ENCODE measurements at regions of chr19 and their contacts with region 1.

Region 1: GRCh38 chr19:49340069-49340864 is 5.1 kb downstream of the CD37 start:
- DNase-seq: peak; percentile 56
- H3K4me3 ChIP-seq: no peak overlapping the region
- H3K27ac ChIP-seq: no peak overlapping the region
- H3K4me1 ChIP-seq: peaks cover 15% of the 10 kb centered on the region
- H3K27me3 ChIP-seq: no peaks in the 10 kb centered on the region
- CTCF ChIP-seq: no peak
- POLR2A ChIP-seq: no peak

Region 2: DNA sequence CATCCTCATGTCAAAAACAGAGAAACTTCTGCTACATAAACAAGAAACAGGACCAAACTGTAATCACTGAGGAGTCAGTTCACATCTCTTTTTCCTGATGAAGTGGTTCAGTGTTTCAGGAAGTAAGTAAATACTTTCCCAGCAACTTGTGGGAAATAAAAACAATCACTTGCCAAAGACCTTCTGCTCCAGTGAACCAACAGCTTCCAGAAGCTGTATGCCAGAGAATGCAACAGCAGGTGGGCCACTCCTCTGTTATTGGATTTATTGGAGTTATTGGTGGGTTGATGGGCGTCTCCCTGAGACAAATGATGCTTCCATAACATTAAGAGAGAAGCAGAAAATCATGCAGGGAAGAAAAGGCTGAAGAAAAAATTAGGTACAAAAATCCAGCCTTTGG is 25.2 kb before region 1 on chr19:
- CTCF ChIA-PET with region 1: no interaction called
- POLR2A ChIA-PET with region 1: no interaction called
- dilution Hi-C with region 1: no loop called
- intact Hi-C with region 1: loop called (anchors 1 kb)
- DNase-seq: peak; percentile 39
- H3K4me3 ChIP-seq: no peak overlapping the region
- H3K27ac ChIP-seq: no peak overlapping the region
- H3K4me1 ChIP-seq: no peaks in the 10 kb centered on the region
- H3K27me3 ChIP-seq: no peaks in the 10 kb centered on the region
- CTCF ChIP-seq: no peak
- POLR2A ChIP-seq: no peak

Region 3: DNA sequence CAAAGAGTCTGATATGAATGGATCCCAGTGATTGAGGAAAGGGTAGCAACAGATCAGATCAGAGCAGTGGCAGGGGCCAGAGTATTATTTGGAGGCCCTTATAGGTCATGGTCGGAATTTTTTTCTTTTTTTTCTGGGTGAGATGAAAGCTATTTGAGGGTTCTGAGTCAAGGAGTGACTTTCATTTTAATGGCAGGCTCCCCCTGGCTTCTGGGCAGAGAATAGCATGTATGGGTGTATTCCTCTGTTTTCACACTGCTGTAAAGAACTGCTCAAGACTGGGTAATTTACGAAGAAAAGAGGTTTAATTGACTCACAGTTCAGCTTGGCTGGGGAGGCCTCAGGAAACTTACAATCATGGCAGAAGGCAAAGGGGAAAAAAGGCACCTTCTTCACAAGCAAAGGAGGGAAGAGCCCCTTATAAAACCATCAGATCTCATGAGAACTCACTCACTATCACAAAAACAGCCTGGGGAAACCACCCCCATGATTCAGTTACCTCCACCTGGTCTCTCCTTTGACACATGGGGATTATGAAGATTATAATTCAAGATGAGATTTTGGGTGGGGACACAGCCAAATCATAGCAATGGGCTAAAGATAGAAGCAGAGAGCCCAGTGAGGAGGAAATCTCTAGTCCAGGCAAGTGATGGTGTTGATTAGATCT is 12.3 kb before region 1 on chr19:
- CTCF ChIA-PET with region 1: interaction called, 15 read pairs
- POLR2A ChIA-PET with region 1: no interaction called
- dilution Hi-C with region 1: no loop called
- intact Hi-C with region 1: no loop called
- DNase-seq: peak; percentile 34
- H3K4me3 ChIP-seq: no peak overlapping the region
- H3K27ac ChIP-seq: no peak overlapping the region
- H3K4me1 ChIP-seq: no peaks in the 10 kb centered on the region
- H3K27me3 ChIP-seq: no peaks in the 10 kb centered on the region
- CTCF ChIP-seq: peak; percentile 50 to 65
- POLR2A ChIP-seq: no peak

Region 4: DNA sequence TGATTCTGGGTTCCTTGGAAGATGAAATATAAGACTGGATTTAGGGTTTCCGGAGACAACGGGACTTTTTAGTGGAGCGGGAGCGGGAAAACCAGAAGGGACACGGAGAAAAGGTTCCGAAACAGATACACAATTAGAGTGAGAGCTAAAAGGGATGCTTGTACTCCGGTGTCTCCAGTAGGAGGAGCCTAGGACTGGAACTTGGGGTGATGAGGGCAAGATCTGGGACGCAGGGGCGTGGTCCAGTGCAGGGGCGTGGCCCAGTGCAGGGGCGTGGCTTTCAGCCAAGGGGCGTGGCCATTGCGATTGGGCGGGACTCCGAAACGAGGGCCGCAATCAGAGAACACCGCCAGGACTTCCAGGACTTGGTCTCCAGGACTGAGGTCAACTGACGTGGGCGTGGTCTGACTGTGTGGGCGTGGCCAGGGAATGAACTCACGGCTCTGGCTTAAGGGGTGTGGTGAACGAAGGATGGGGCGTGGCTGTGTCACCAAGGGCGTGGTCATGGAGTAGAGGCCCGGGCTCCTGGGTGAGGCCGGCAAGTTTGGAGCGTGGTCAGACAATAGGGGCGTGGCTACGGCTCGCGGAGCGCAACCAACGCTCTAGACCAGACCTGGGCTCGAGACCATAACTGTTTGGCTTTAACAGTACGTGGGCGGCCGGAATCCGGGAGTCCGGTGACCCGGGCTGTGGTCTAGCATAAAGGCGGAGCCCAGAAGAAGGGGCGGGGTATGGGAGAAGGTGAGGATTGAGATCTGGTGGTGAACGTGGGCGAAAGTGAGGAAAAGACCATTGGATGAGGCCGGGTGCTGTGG is 23.2 kb after region 1 on chr19 and contains the start of gene DKKL1:
- CTCF ChIA-PET with region 1: interaction called, 3 read pairs
- POLR2A ChIA-PET with region 1: no interaction called
- dilution Hi-C with region 1: no loop called
- intact Hi-C with region 1: loop called (anchors 1 kb)
- DNase-seq: peak; percentile 100
- H3K4me3 ChIP-seq: peak within 1 kb of the TSS; percentile 83 to 97 (median 95)
- H3K27ac ChIP-seq: peak within 1 kb of the TSS; percentile 91
- H3K4me1 ChIP-seq: peaks cover 13% of the 10 kb centered on the region
- H3K27me3 ChIP-seq: no peaks in the 10 kb centered on the region
- CTCF ChIP-seq: no peak
- POLR2A ChIP-seq: no peak
- total RNA-seq, gene DKKL1: not detected in 2 replicates

Region 5: GRCh38 chr19:49391581-49392399 is 51.5 kb after region 1 on chr19:
- CTCF ChIA-PET with region 1: no interaction called
- POLR2A ChIA-PET with region 1: no interaction called
- dilution Hi-C with region 1: no loop called
- intact Hi-C with region 1: no loop called
- DNase-seq: peak; percentile 55
- H3K4me3 ChIP-seq: no peak overlapping the region
- H3K27ac ChIP-seq: no peak overlapping the region
- H3K4me1 ChIP-seq: no peaks in the 10 kb centered on the region
- H3K27me3 ChIP-seq: peaks cover 0 to 2% of the 10 kb centered on the region in 2 experiments
- CTCF ChIP-seq: peak; percentile 68 to 81
- POLR2A ChIP-seq: no peak

Region 6: GRCh38 chr19:49443366-49444099 is 103.3 kb after region 1 on chr19:
- CTCF ChIA-PET with region 1: no interaction called
- POLR2A ChIA-PET with region 1: no interaction called
- dilution Hi-C with region 1: no loop called
- intact Hi-C with region 1: no loop called
- DNase-seq: peak; percentile 92
- H3K4me3 ChIP-seq: peak overlapping the region; percentile 58 to 78 (median 65)
- H3K27ac ChIP-seq: no peak overlapping the region
- H3K4me1 ChIP-seq: no peaks in the 10 kb centered on the region
- H3K27me3 ChIP-seq: peaks cover 30 to 37% of the 10 kb centered on the region in 2 experiments
- CTCF ChIP-seq: peak; percentile 73 to 93
- POLR2A ChIP-seq: no peak

Measured in endothelial cell of umbilical vein (primary cell).